Pancreas (tissue), 10 donors: ENCODE measurements at regions of chr6 and their contacts with region 1.

Region 1: DNA sequence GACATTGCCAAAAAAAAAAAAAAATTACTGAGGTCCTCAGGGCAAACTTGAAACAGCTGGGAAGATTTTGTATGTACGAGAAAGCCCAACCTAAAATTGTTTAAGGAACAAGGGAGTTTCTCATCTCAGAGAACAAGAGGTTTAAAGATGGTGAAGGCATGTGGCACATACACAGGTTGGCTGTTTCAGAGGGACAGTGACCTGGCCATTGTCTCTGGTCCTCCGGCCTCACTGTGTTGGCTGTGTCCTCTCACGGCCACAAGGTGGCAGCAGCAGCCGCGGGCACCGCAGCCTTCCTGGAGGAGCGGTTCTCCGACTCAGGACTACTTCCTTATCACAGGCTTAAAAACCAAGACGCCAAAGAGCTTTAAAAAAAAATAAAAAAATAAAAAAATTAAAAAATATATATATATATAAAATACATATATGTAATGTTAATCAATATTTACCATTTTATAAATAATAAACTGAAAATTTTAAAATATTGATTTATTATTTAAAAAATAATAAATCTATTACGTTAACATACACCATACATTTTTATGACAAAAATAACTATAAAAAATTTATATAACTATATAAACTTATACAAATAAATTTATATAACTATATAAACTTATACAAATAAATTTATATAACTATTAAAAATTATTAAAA is 52.8 kb downstream of the GTF2H5 start:
- DNase-seq: peak; percentile 66 to 91 (median 82)
- ATAC-seq: peak; percentile 97 to 100 (median 99)
- H3K4me3 ChIP-seq: no peak overlapping the region
- H3K27ac ChIP-seq: no peak overlapping the region
- H3K4me1 ChIP-seq: no peaks in the 10 kb centered on the region
- H3K27me3 ChIP-seq: no peaks in the 10 kb centered on the region
- CTCF ChIP-seq: peak; percentile 85 to 91 (median 86)

Region 2: DNA sequence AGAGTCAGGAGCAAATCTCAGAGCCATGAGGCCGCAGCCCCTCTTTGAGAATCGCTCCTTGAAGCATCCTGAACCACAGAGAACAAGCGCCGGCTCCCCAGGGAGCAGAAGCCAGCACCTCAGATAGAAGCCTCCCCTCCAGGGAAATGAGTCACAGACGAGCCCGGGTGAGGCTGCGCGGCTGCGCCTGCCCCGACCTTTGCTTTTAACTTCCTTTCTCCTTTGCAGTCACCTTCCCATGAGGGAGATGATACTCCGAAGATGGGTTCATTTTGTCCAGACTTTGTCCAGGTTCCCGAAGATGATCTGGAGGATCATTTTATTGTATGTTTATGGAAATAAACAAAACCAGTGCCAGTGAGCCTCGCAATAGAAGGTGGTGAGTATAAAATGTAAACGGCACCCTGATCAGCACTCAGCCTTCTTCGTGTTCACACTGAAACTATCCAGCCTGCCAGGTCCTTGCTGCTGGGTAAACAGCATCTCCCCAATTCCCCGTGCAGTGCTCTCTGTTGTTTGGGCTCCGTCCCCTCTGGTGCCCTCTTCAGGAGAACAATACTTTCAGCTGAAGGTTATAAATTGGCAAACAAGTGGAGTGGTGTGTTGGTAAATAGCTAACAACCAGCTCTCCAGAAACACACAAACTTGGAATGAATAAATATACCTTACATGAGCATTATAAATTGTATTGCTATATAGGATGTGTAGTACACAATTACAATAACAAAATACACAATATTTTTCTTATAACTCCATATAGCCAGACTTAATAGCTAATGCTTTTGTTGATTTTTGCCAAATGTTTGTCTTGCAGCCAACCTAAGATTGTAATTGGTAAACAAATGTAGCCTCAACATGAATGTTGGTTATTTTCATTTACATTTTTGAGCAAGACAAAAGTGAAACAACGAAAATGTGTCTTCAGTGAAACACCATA is 297.5 kb after region 1 on chr6:
- intact Hi-C with region 1: loop called in 2 of 3 experiments (anchors 10 kb)
- DNase-seq: peak in 4 of 6 donors; percentile 47 to 67 (median 54)
- ATAC-seq: peak; percentile 88 to 99 (median 94)
- H3K4me3 ChIP-seq: peak overlapping the region in 2 of 4 donors; percentile 3 to 13
- H3K27ac ChIP-seq: no peak overlapping the region
- H3K4me1 ChIP-seq: peaks cover 0 to 4% (median 0%) of the 10 kb centered on the region in 3 donors
- H3K27me3 ChIP-seq: no peaks in the 10 kb centered on the region
- CTCF ChIP-seq: peak; percentile 14 to 45 (median 32)

Region 3: DNA sequence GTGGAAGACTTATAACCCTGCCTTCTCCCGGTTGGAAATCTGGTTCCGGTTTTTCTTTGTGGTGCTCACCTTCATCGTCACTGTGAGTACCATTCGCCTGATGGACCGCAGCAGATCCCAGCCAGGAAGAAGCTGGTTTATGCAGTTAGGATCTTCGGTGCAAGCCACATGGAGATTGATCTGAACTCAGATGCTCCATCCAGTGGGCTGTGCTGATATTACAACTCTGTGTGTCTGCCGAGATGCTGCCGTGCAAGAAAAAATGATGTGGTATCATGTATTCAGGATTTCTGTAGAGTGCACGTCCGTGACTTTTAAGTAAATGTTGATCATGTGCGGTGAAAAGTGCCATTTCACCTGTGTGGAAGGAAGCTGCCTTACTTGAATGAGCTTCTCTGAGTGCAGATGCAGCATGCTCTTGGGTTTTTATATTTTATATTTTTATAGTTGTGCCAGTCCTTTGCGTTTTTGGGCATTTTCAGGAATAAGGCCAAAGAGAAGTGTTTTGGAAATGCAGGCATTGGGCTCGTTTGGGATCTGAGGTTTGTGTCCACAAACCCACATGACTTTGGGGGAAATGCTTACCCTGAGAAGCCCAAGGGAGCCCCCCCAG is 384.5 kb after region 1 on chr6:
- intact Hi-C with region 1: loop called in 1 of 3 experiments (anchors 10 kb)
- DNase-seq: peak in 1 of 6 donors; percentile 63
- ATAC-seq: peak; percentile 53 to 85 (median 84)
- H3K4me3 ChIP-seq: no peak overlapping the region
- H3K27ac ChIP-seq: no peak overlapping the region
- H3K4me1 ChIP-seq: peaks cover 0 to 16% (median 15%) of the 10 kb centered on the region in 3 donors
- H3K27me3 ChIP-seq: no peaks in the 10 kb centered on the region
- CTCF ChIP-seq: peak; percentile 15 to 57 (median 32)

Region 4: GRCh38 chr6:158686791-158687381 is 466.0 kb after region 1 on chr6:
- intact Hi-C with region 1: loop called in 2 of 3 experiments (anchors 10 kb)
- DNase-seq: no peak
- ATAC-seq: peak in 2 of 4 donors; percentile 34 to 52
- H3K4me3 ChIP-seq: no peak overlapping the region
- H3K27ac ChIP-seq: no peak overlapping the region
- H3K4me1 ChIP-seq: no peaks in the 10 kb centered on the region
- H3K27me3 ChIP-seq: no peaks in the 10 kb centered on the region
- CTCF ChIP-seq: no peak